Head of caudate nucleus (tissue), 42 donors: ENCODE measurements at regions of chr5 and their contacts with region 1.

Region 1: GRCh38 chr5:64634997-64635686 is 55.2 kb upstream of the SHISAL2B start:
- DNase-seq: no peak

Region 2: GRCh38 chr5:64784451-64785025 is 149.4 kb after region 1 on chr5:
- intact Hi-C with region 1: loop called (anchors 5 kb)
- DNase-seq: peak; percentile 37 to 93 (median 78)